Sciatic nerve (tissue), 2 donors: ENCODE measurements at regions of chr1 and their contacts with region 1.

Region 1: GRCh38 chr1:158002022-158002630 is 8.7 kb downstream of the KIRREL1 start:
- DNase-seq: no peak
- ATAC-seq: peak; percentile 54

Region 2: GRCh38 chr1:159532922-159533321 is 1530.8 kb after region 1 on chr1:
- intact Hi-C with region 1: loop called (anchors 10 kb)
- DNase-seq: no peak
- ATAC-seq: no peak